ENCODE measurements at regions of chr5 and their contacts with region 1.

Region 1: GRCh38 chr5:164504141-164504772 is 998.8 kb downstream of the MAT2B start:
- DNase-seq: no peak
- ATAC-seq: no peak
- H3K4me3 ChIP-seq: no peak overlapping the region
- H3K27ac ChIP-seq: no peak overlapping the region
- H3K4me1 ChIP-seq: no peaks in the 10 kb centered on the region
- H3K27me3 ChIP-seq: no peaks in the 10 kb centered on the region

Region 2: DNA sequence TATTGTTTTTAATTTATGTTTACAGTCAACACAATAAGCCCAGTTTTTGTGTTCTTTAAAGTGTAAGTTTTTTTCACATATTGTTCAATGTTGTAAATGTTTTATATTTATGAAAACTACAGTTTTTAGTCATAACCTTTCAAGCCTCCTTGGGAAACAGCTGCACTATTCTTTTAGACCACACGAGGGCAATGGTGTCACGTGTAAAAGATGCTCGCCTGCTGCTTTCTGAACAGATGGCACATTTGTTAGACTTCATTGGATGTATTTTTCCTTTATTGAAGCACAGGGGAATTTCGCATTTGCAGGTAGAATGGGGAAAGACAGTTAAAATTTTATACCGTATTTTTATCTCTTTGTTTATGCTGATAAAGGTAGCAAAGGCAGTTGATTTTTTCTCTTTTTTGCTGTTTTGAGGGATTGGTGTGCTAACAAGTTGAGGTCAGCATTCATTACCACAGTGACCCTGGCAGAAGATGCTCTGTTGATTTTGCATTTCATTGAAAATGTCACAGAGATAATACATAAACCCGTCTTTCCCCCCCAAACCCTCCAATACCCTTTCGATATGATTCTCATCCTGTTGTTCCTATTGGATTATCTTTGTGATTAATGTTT is 939.8 kb before region 1 on chr5:
- intact Hi-C with region 1: loop called (anchors 5 to 10 kb)
- DNase-seq: no peak
- ATAC-seq: peak; percentile 74
- H3K4me3 ChIP-seq: no peak overlapping the region
- H3K27ac ChIP-seq: no peak overlapping the region
- H3K4me1 ChIP-seq: no peaks in the 10 kb centered on the region
- H3K27me3 ChIP-seq: peaks cover 0 to 3% of the 10 kb centered on the region in 2 donors